PC-3 (cell line): ENCODE measurements at regions of chr2 and their contacts with region 1.

Region 1: DNA sequence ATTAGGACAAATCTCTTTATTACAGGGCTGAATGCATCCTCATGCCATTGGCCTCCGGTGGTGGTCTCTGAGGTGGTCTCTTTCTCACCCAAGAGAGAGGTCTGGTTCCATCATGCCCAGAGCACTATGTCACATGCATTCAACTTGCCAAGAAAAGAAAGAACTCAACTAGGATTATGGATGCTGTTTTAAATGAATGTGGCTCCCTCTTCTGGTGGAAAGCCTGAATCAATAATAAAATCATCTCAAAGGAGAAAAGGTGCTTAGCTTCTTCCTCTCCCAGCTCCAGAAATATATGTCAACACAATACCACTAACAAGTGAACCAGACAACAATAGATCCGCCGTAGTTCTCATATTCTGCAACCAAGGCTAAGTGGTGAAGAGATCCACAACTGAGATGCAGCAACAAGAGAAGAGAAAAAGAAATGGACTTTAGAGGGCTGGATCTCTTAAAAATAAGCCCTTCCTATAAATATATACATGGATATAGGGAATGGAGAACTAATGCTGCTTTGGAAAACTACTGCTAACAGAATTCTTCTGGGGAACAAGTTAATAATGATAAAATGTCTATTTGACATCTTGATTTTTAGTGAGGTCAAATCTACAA is 396.8 kb downstream of the NCKAP5 start:
- DNase-seq: peak; percentile 84
- ATAC-seq: peak; percentile 56
- H3K4me3 ChIP-seq: no peak overlapping the region
- H3K27ac ChIP-seq: no peak overlapping the region
- H3K4me1 ChIP-seq: peaks cover 11% of the 10 kb centered on the region
- H3K27me3 ChIP-seq: no peaks in the 10 kb centered on the region
- CTCF ChIP-seq: peak; percentile 84

Region 2: DNA sequence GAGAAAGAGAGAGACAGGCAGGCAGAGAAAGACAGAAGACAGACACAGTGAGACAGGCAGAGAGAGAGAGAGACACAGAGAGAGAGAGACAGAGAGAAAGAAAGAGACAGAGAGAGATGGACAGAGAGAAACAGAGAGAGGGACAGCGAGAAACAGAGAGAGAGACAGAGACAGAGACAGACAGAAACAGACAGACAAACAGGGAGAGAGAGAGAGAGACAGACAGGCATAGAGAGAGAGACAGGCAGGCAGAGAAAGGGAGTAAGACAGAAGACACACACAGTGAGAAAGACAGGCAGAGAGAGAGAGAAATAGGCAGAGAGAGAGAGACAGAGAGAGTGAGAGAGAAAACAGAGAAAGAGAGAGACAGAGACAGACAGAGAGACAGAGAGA is 904.4 kb before region 1 on chr2:
- CTCF ChIA-PET with region 1: no interaction called
- POLR2A ChIA-PET with region 1: no interaction called
- intact Hi-C with region 1: loop called (anchors 2 kb)
- DNase-seq: no peak
- ATAC-seq: no peak
- H3K4me3 ChIP-seq: no peak overlapping the region
- H3K27ac ChIP-seq: no peak overlapping the region
- H3K4me1 ChIP-seq: peaks cover 8% of the 10 kb centered on the region; the same call in 1 of the 2 replicates
- H3K27me3 ChIP-seq: no peaks in the 10 kb centered on the region
- CTCF ChIP-seq: no peak

Region 3: DNA sequence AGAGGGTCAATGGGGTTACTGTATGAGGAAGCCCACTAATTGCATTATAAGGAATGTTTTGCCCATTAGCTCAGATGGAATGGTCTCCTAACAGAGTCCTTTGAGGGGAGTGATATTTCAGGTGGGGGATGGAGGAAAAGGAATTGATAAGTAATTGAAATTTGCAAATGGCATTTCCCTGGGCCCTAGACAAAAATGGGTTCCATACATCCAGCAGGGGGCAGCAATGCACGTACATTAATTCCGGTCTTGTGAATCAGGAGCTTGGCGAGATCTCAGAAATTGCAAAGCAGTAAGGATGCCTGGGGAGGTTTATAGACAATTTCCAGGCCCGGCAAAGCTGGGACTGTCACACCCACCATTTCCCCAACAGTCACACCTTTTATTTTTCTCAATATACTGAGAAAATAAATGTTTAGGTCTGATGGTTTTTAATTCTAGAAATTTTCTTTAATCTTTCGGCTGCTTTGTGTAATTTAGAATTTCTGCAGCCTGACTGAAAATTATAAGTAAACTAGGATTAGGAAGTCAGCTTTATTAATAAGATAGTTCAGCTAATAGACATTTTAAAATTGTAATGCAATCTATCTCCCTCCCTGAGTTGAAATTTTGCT is 624.3 kb before region 1 on chr2:
- CTCF ChIA-PET with region 1: interaction called, 5 read pairs
- POLR2A ChIA-PET with region 1: no interaction called
- intact Hi-C with region 1: loop called (anchors 1 kb)
- DNase-seq: peak; percentile 82
- ATAC-seq: peak; percentile 65
- H3K4me3 ChIP-seq: no peak overlapping the region
- H3K27ac ChIP-seq: no peak overlapping the region
- H3K4me1 ChIP-seq: peaks cover 14% of the 10 kb centered on the region
- H3K27me3 ChIP-seq: no peaks in the 10 kb centered on the region
- CTCF ChIP-seq: peak; percentile 85

Region 4: DNA sequence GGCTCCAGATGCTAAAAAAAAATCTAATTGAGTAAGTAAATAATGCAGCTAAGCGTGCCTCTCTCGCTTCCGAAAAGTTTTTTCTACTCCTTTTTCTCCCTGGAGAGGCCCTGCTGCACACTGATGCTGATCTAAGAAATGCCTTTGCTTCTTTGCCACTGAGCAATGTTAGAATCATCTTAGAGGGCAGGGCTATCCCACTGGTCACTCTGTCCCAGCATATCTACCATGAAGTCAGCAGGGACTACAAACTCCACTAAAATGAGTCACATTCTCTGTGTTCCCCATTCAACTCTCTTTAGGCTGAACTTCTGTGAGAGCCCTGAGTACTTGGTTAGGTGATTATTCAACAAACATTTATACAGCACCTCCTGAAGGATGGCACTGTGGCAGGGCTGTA is 373.9 kb before region 1 on chr2:
- CTCF ChIA-PET with region 1: no interaction called
- POLR2A ChIA-PET with region 1: no interaction called
- intact Hi-C with region 1: loop called (anchors 10 kb)
- DNase-seq: peak; percentile 36
- ATAC-seq: peak; percentile 77
- H3K4me3 ChIP-seq: no peak overlapping the region
- H3K27ac ChIP-seq: no peak overlapping the region
- H3K4me1 ChIP-seq: no peaks in the 10 kb centered on the region; the same call in 1 of the 2 replicates
- H3K27me3 ChIP-seq: no peaks in the 10 kb centered on the region
- CTCF ChIP-seq: no peak

Region 5: DNA sequence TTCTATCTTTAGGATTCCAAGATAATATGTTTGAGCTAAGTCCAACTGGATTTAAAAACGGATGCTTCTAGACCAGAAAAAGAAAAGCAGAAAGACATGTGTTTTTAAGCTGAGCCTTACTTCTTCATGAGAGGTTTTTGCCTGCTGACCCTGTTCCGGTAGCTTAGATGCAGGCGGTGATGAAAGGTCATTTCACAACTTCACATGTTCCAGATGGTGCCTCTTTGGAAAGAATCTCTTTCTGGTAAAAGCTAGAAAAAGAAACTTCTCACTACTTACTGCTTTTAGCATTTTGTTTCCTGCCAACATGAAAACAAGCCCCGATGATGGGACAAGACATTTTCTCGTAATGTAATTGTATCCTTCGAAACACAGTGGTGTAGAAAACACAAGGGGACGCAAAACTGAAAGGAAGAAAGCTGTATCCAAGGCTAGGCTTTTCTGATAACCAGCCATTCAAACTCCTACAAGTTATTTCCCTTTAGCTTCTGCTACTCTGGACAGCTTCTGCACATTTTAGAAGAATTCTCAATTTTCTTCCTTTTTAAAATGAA is 94.2 kb before region 1 on chr2:
- CTCF ChIA-PET with region 1: no interaction called
- POLR2A ChIA-PET with region 1: no interaction called
- intact Hi-C with region 1: no loop called
- DNase-seq: no peak
- ATAC-seq: no peak
- H3K4me3 ChIP-seq: no peak overlapping the region
- H3K27ac ChIP-seq: no peak overlapping the region
- H3K4me1 ChIP-seq: peaks cover 12% of the 10 kb centered on the region
- H3K27me3 ChIP-seq: no peaks in the 10 kb centered on the region
- CTCF ChIP-seq: no peak

Region 6: DNA sequence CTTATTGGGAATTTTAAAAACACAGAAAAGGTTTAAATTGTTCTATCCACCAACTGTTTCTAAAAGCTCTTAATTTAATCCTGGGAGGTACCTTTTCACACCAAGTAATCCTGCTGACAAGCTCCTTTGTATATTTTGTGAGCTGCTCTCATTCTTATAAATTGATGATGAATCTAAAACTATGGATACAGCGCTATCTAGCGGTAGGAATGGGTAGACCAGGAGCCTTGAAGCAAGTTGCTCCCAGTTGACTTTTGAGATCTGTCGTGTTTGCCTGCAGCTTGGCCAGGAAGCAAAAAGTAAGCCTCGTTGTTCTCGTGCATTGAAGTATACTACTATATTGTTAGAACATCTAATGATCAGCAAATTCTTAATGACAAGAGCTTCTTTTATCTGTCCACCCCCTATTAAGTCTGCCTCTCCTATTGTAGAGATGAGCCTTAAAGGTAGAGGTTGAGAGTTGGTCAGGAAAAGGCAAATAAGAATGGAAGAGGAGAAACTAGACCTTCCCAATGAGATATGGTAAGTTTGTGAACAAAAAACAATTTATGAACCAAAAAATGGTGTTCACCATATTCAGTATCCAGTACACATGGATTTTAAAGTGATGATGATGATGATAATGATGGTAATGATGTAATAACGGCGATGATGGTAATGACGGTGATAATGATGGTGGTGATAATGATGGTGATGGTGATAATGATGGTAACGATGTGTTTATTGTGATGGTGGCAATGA is 608.8 kb after region 1 on chr2:
- CTCF ChIA-PET with region 1: interaction called, 3 read pairs
- POLR2A ChIA-PET with region 1: no interaction called
- intact Hi-C with region 1: loop called (anchors 2 kb)
- DNase-seq: peak; percentile 94
- ATAC-seq: peak; percentile 20; the same call in 1 of the 2 replicates
- H3K4me3 ChIP-seq: no peak overlapping the region
- H3K27ac ChIP-seq: no peak overlapping the region
- H3K4me1 ChIP-seq: peaks cover 23% of the 10 kb centered on the region
- H3K27me3 ChIP-seq: no peaks in the 10 kb centered on the region
- CTCF ChIP-seq: peak; percentile 95